Transverse colon (tissue), 4 donors: ENCODE measurements at regions of chr11 and their contacts with region 1.

Region 1: GRCh38 chr11:78139422-78140391 is at the start of gene ALG8:
- DNase-seq: peak; percentile 97
- H3K4me3 ChIP-seq: peak within 1 kb of the TSS; percentile 62 to 78 (median 68)
- H3K27ac ChIP-seq: peak within 1 kb of the TSS; percentile 79 to 86 (median 80)
- H3K4me1 ChIP-seq: peaks cover 3 to 16% (median 9%) of the 10 kb centered on the region in 4 donors
- H3K27me3 ChIP-seq: no peaks in the 10 kb centered on the region
- CTCF ChIP-seq: no peak
- EP300 ChIP-seq: no peak
- POLR2A ChIP-seq: peak; percentile 71
- total RNA-seq, gene ALG8: 4.9 to 28.9 (median 14.5) TPM

Region 2: DNA sequence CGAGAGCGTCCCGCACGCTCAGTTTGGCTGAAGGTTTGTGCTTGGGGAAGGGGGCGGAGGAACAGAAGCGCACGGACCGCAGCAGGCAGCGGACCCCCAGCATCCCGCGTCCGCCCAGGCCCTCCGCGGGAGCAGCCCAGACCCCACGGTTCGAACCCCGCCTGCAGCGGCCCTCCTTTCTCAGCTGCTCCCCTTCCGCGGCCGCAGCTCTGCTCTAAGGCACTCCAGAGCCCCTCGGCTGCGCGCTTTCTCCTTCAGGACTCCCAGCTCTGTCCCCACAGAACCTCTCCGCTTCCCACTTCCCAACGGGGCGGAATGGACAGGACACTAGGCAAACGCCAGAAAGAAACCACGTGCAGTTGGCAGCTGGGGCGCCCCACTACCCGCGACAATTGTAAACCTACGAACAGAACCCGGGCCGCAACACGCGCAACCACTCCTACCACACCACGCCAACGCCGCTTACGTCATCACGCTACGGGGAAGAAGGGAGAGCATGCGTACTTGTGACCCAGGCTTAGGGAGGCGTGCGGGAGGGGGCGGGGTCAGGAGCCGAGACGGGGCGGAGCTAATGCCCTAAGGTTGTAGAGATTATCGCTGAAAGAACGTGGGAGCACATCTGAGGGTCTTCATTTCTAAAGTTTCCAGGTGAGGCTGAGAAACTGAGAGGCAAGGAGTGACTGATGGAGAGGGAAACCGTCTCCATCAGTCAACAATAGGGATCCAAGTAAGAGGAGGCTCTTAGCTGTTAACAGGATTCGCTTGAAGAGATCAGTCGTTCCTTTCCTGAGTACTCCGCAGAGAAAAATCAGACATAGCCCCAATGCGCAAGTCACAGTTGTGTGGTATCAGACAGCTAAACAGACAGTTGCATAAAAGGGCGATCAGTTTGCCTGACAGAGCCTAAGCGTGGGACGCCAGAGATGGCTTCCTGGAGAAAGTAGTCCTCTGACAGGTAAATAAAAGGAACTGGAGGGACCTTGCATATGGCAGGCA is 435.0 kb after region 1 on chr11 and contains the start of gene NARS2:
- in situ Hi-C with region 1: loop called in 2 of 4 experiments (anchors 25 kb)
- intact Hi-C with region 1: no loop called
- DNase-seq: peak; percentile 98
- H3K4me3 ChIP-seq: peak within 1 kb of the TSS; percentile 53 to 91 (median 66)
- H3K27ac ChIP-seq: peak within 1 kb of the TSS; percentile 80 to 88 (median 84)
- H3K4me1 ChIP-seq: peaks cover 6 to 17% (median 8%) of the 10 kb centered on the region in 4 donors
- H3K27me3 ChIP-seq: no peaks in the 10 kb centered on the region
- CTCF ChIP-seq: no peak
- EP300 ChIP-seq: no peak
- POLR2A ChIP-seq: peak; percentile 79
- total RNA-seq, gene NARS2: 6.4 to 15.1 (median 10.4) TPM